ENCODE measurements at regions of chr3 and their contacts with region 1.

Region 1: DNA sequence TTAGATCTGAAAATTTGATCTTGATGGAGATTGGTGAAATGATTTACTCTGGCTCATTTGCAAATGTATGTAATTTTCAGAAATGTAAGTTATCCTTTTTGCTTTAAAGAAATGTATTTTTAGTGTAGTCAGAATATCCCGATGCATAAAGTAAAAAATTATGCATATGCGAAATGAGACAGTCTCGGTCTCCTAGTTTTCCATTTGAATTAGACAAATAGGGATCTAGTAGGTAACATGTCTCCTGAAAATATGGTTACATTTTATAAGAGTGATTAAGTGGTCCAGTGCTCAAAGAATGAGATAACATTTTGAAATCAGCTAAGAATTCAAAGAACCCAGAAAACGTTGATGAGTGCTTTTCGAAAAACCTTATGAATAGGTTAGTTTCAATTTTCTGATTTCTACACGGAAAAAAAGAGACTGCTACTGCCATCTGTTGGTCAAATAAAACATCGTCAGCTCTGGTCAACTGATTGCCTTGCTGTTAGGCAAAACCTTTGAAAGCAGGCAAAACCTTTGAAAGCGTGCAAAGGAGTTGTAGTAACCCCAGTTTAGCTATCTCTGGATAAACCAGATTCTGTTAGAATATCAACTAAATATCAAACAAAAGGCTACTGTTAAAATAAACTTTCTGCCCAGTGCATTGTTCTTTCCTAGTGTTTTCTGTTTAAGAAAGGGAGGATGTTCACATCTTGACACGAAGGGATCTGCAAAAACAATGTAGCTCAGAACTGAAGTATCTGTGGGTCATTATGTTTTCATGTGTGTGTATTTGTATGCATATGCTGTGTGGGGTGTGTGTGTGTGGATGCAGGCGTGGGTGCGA is 59.3 kb upstream of the CHMP2B start:
- DNase-seq: peak in 4 of 9 experiments; percentile 8 to 53 (median 26)
- ATAC-seq: no peak
- H3K4me3 ChIP-seq: no peak overlapping the region
- H3K4me3 Mint-ChIP-seq: peak overlapping the region; percentile 22
- H3K27ac ChIP-seq: no peak overlapping the region
- H3K27ac Mint-ChIP-seq: no peak overlapping the region
- H3K4me1 ChIP-seq: no peaks in the 10 kb centered on the region
- H3K4me1 Mint-ChIP-seq: peaks cover 5% of the 10 kb centered on the region
- H3K27me3 ChIP-seq: peaks cover 0 to 3% of the 10 kb centered on the region in 2 experiments
- H3K27me3 Mint-ChIP-seq: peaks cover 4% of the 10 kb centered on the region
- CTCF ChIP-seq: peak; percentile 68

Region 2: DNA sequence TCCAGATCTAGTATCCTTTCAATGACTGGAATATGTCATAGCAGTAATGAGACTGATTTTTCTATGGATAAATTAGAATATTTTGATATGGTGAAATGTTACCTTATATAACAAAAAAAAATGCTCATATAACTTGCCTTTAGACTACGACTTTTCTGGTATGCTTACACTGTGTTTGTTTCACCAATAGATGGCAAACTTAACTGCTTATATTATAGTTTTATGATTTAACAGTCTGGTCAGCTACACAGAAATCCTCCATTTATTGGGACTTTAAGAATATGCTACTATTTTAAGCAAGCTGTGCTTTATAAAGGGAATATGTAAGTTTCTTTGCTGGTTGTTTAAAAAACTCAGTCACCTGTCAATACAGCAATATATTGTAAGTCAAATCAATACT is 382.5 kb before region 1 on chr3:
- CTCF ChIA-PET with region 1: no interaction called
- POLR2A ChIA-PET with region 1: no interaction called
- intact Hi-C with region 1: loop called in 1 of 2 experiments (anchors 10 kb)
- DNase-seq: no peak
- ATAC-seq: no peak
- H3K4me3 ChIP-seq: no peak overlapping the region
- H3K4me3 Mint-ChIP-seq: no peak overlapping the region
- H3K27ac ChIP-seq: no peak overlapping the region
- H3K27ac Mint-ChIP-seq: no peak overlapping the region
- H3K4me1 ChIP-seq: no peaks in the 10 kb centered on the region
- H3K4me1 Mint-ChIP-seq: no peaks in the 10 kb centered on the region
- H3K27me3 ChIP-seq: no peaks in the 10 kb centered on the region
- H3K27me3 Mint-ChIP-seq: no peaks in the 10 kb centered on the region
- CTCF ChIP-seq: no peak

Region 3: GRCh38 chr3:87179642-87180041 is 11.8 kb after region 1 on chr3:
- CTCF ChIA-PET with region 1: interaction called, 12 read pairs
- POLR2A ChIA-PET with region 1: no interaction called
- intact Hi-C with region 1: no loop called
- DNase-seq: no peak
- ATAC-seq: no peak
- H3K4me3 ChIP-seq: no peak overlapping the region
- H3K4me3 Mint-ChIP-seq: no peak overlapping the region
- H3K27ac ChIP-seq: no peak overlapping the region
- H3K27ac Mint-ChIP-seq: no peak overlapping the region
- H3K4me1 ChIP-seq: no peaks in the 10 kb centered on the region
- H3K4me1 Mint-ChIP-seq: no peaks in the 10 kb centered on the region
- H3K27me3 ChIP-seq: peaks cover 0 to 3% of the 10 kb centered on the region in 2 experiments
- H3K27me3 Mint-ChIP-seq: peaks cover 13% of the 10 kb centered on the region
- CTCF ChIP-seq: no peak

Measured in CD8-positive, alpha-beta T cell (primary cell).